ENCODE measurements at regions of chrX and their contacts with region 1.

Region 1: DNA sequence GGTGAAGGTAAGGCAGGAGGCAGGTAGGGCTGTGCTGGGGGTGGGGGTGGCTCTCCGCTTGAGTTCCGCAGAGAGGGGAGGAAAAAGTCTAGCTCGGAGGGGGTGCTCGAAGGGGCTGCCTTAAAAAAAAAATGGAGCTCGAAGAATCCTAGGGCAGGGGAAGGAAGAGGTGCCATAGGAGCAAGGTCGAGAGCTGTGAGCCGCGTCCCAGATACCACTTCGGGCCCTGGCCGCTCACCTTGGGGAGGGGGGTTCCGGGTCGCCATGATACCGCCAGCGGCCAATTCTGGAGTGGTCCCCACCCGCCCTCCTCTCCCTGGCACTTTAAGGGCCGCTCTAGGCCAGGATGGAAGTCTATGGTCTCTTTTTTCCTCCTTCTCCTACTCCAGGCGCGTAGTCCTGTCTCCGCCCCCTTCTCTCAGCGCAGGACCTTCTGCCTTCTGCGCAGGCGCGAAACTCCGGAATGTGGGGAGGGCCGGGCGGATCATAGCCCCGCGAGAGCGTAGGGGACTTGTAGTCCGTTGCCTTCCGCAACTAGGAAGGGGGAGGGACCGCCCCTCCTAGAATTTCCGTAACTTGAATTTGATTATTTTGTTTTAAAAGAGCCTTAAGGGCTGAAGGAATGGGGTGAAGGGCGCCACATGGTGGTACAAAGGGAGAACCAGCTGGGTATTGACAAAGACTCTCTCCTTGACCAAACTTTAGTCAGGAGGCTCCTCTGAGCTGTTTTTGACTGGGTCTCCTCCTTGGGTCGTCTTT is at the start of gene FUNDC1:
- DNase-seq: peak; percentile 91
- ATAC-seq: peak; percentile 99
- H3K4me3 ChIP-seq: peak within 1 kb of the TSS; percentile 81
- H3K27ac ChIP-seq: peak within 1 kb of the TSS; percentile 85
- H3K4me1 ChIP-seq: no peaks in the 10 kb centered on the region
- H3K27me3 ChIP-seq: no peaks in the 10 kb centered on the region
- CTCF ChIP-seq: peak; percentile 40; the same call in 1 of the 2 replicates
- POLR2A ChIP-seq: peak; percentile 43; the same call in 1 of the 2 replicates
- RAD21 ChIP-seq: peak; percentile 27; the same call in 1 of the 2 replicates
- total RNA-seq, gene FUNDC1: 8.6 and 13.6 TPM in 2 replicates

Region 2: GRCh38 chrX:44130189-44130588 is 412.6 kb before region 1 on chrX:
- CTCF ChIA-PET with region 1: no interaction called
- POLR2A ChIA-PET with region 1: no interaction called
- dilution Hi-C with region 1: no loop called
- in situ Hi-C with region 1: no loop called
- intact Hi-C with region 1: no loop called
- DNase-seq: no peak
- ATAC-seq: no peak
- H3K4me3 ChIP-seq: no peak overlapping the region
- H3K27ac ChIP-seq: no peak overlapping the region
- H3K4me1 ChIP-seq: no peaks in the 10 kb centered on the region
- H3K27me3 ChIP-seq: peaks cover 2% of the 10 kb centered on the region; the same call in 1 of the 2 replicates
- CTCF ChIP-seq: no peak
- POLR2A ChIP-seq: no peak
- RAD21 ChIP-seq: no peak

Region 3: DNA sequence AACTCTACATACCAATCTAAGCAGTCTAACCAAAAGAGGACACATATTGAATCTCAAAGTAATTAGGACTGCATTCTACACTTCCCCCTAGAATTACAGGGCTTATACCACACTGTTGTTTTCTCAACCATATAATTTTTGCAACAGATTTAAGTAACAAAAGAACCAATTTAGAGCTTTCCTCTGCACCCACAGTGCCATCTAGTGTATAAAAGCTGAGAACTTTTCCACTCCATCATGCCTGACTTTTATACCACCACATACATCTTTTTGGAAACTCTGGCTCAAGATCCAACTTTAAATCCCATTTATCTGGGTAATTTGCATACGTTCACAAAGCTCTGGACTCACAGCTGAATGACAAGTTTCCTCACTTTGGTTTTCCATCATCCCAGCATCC is 298.7 kb before region 1 on chrX:
- CTCF ChIA-PET with region 1: no interaction called
- POLR2A ChIA-PET with region 1: no interaction called
- dilution Hi-C with region 1: no loop called
- in situ Hi-C with region 1: no loop called
- intact Hi-C with region 1: loop called (anchors 5 kb)
- DNase-seq: peak; percentile 29
- ATAC-seq: peak; percentile 75
- H3K4me3 ChIP-seq: no peak overlapping the region
- H3K27ac ChIP-seq: no peak overlapping the region
- H3K4me1 ChIP-seq: no peaks in the 10 kb centered on the region
- H3K27me3 ChIP-seq: peaks cover 3% of the 10 kb centered on the region
- CTCF ChIP-seq: peak; percentile 51
- POLR2A ChIP-seq: no peak
- RAD21 ChIP-seq: peak; percentile 53

Region 4: GRCh38 chrX:44872817-44873414 is 330.2 kb after region 1 on chrX and contains the start of gene KDM6A:
- CTCF ChIA-PET with region 1: no interaction called
- POLR2A ChIA-PET with region 1: no interaction called
- dilution Hi-C with region 1: no loop called
- in situ Hi-C with region 1: no loop called
- intact Hi-C with region 1: loop called (anchors 2 kb)
- DNase-seq: peak; percentile 96
- ATAC-seq: peak; percentile 90
- H3K4me3 ChIP-seq: peak within 1 kb of the TSS; percentile 93
- H3K27ac ChIP-seq: peak within 1 kb of the TSS; percentile 89
- H3K4me1 ChIP-seq: no peaks in the 10 kb centered on the region
- H3K27me3 ChIP-seq: no peaks in the 10 kb centered on the region
- CTCF ChIP-seq: no peak
- POLR2A ChIP-seq: peak; percentile 69
- RAD21 ChIP-seq: no peak
- total RNA-seq, gene KDM6A: 24.9 and 25.3 TPM in 2 replicates